Activated CD4-positive, alpha-beta T cell treated with anti-CD3 and anti-CD28 coated beads for 36 hours (primary cell): ENCODE measurements at regions of chr21 and their contacts with region 1.

Region 1: DNA sequence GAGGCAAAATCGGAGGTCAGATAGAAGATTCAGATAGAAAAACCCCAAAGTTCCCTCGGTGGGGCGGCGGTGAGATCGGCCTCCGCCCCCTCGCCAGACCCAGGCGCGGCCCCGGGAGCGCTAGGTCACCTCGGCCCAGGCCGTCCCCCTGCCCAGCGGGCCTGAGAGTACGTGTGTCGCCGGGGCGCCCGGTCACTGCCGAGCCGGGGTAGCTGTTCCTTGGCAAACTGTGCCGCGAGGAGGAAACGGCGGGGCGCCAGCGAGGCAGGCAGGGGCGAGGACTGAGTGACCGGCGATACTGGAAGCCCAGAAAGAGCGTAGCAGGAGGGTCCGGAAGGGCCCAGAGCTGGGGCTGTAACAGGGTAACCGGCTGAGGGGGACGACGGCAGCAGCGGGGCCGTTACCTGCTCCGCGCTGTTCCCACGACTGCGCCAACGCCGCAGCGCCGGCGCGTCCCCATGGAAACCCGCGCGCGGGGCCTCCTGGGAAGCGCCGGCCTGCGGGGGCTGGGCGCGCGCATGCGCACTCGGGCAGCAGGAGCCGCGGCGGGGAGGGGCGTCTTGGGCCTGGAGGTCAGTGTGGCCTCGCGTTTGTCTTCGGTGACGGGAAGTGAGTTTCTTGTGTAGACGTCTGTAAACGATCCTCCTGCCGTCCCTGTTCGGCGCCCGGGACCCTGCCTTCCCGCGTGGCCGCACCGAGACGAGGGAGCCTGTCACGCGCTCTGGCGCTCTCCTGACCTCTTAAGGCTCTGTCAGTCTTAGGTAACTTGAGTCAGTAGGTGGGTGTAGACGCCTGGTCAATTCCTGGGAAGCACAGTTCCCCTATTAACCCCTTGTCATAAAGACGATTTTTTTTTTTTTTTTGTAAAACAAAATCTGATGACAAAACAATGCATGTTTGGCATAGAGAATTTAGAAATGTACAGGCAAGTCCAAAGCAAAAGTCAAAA is at the start of gene LCA5L:
- DNase-seq: peak; percentile 94
- ATAC-seq: peak; percentile 95
- H3K4me3 Mint-ChIP-seq: peak within 1 kb of the TSS; percentile 84
- H3K27ac Mint-ChIP-seq: peak within 1 kb of the TSS; percentile 93
- H3K4me1 Mint-ChIP-seq: peaks cover 16% of the 10 kb centered on the region
- H3K27me3 Mint-ChIP-seq: peaks cover 6% of the 10 kb centered on the region
- total RNA-seq, gene LCA5L: 0.25 to 0.32 TPM

Region 2: DNA sequence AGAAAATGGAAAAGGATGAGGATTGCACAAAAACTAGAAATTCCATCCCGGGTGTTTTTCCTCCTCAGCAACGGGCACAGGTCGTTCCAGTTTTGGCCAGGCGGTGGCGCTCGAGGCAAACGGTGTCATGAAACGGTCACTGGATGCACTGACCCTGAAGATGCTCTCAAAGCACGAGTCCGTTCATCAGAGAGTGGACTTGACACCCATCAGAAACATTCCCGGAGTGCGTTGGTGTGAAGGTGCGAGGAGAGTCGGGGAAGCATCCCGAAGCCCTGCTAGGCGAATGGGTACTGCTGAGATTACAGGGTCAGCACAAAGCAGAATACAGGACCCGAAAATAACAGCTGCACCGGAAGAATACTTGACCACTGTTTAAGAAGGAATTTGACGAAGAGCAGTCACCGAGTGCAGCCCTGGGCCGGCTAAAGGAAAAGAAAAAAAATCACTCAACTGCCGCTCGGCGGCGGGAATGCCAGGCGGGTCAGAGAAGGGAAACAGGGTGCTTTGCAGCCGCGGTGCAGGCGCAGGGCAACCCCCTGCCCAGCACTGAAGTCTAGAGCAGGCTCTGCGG is 711.5 kb before region 1 on chr21:
- CTCF ChIA-PET with region 1: no interaction called
- POLR2A ChIA-PET with region 1: no interaction called
- intact Hi-C with region 1: loop called in 1 of 2 experiments (anchors 2 kb)
- DNase-seq: peak; percentile 84
- ATAC-seq: peak; percentile 60
- H3K4me3 Mint-ChIP-seq: peak overlapping the region; percentile 74
- H3K27ac Mint-ChIP-seq: peak overlapping the region; percentile 67
- H3K4me1 Mint-ChIP-seq: peaks cover 11% of the 10 kb centered on the region
- H3K27me3 Mint-ChIP-seq: peaks cover 17% of the 10 kb centered on the region

Region 3: DNA sequence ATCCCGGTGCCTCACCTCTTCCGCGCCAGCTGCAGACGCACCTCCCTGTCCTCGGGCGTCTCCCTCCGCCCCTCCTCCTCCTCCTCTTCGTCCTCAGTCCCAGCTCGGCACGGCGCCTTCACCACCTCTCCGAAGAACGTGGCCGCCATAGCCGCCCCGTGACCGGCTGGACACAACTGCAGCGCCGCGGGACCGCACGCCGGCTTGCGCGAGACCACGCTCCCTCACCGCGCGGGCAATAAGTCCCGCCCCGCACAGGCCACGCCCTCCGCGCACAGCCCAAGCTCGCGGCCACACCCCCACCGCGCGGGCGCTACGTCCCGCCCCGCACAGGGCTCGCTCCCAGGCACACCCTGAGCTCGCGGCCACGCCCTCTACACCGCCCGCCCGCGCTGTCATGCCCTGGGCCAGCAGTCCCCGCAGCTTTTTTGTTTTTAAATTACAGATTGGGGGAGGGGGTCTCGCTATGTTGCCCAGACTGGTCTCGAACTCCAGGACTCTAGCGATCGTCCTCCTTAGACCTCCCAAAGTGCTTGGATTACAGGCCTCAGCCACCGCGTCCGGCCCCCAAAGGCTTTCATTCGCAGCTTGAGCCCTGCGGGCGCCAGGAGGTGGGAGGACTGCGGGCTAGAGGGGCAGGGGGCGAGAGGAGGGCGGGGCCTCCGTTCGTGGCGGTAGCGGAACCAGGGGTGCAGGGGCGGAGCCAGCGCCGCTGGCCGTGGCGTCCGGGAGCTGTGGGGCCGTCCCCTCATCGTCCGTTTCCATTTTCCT is 262.2 kb before region 1 on chr21 and contains the start of gene PSMG1:
- CTCF ChIA-PET with region 1: interaction called, 3 read pairs
- POLR2A ChIA-PET with region 1: interaction called, 3 read pairs
- intact Hi-C with region 1: loop called (anchors 1 to 5 kb)
- DNase-seq: peak; percentile 97
- ATAC-seq: peak; percentile 92
- H3K4me3 Mint-ChIP-seq: peak within 1 kb of the TSS; percentile 95
- H3K27ac Mint-ChIP-seq: peak within 1 kb of the TSS; percentile 97
- H3K4me1 Mint-ChIP-seq: peaks cover 63% of the 10 kb centered on the region
- H3K27me3 Mint-ChIP-seq: no peaks in the 10 kb centered on the region
- total RNA-seq, gene PSMG1: 109 to 123 TPM

Region 4: DNA sequence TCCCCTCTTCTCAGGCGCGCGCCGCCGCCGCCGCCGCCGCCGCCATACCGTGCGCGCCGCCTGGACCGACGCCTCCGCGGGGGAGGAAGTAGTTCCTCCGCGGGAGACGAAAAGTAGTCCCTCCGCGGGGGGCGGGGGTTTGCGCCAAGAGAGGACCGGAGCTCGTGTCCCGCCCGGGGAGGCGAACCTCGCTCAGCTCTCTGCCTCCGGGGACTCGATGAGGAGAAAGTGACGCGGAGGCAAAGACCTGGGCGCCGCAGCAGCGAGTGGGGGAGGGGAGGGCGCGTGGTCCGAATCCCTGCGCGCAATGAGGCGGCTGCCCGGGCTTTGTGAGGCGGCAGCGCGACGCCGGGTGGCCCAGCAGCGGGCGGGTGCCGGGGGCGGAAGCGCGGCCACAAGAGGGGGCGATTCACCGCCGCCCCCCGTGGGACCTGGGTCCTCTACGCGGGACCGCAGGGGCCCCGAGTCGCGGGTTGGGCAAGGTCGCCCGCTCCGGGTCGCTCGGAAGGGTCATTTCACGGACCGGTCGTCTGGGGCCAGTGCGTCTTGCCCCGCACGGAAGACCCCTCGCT is 131.9 kb before region 1 on chr21 and contains the start of gene BRWD1:
- CTCF ChIA-PET with region 1: no interaction called
- POLR2A ChIA-PET with region 1: no interaction called
- intact Hi-C with region 1: loop called in 1 of 2 experiments (anchors 1 kb)
- DNase-seq: peak; percentile 85
- ATAC-seq: peak; percentile 42
- H3K4me3 Mint-ChIP-seq: peak within 1 kb of the TSS; percentile 92
- H3K27ac Mint-ChIP-seq: peak within 1 kb of the TSS; percentile 96
- H3K4me1 Mint-ChIP-seq: peaks cover 39% of the 10 kb centered on the region
- H3K27me3 Mint-ChIP-seq: no peaks in the 10 kb centered on the region
- total RNA-seq, gene BRWD1: 19.1 to 24.5 TPM

Region 5: DNA sequence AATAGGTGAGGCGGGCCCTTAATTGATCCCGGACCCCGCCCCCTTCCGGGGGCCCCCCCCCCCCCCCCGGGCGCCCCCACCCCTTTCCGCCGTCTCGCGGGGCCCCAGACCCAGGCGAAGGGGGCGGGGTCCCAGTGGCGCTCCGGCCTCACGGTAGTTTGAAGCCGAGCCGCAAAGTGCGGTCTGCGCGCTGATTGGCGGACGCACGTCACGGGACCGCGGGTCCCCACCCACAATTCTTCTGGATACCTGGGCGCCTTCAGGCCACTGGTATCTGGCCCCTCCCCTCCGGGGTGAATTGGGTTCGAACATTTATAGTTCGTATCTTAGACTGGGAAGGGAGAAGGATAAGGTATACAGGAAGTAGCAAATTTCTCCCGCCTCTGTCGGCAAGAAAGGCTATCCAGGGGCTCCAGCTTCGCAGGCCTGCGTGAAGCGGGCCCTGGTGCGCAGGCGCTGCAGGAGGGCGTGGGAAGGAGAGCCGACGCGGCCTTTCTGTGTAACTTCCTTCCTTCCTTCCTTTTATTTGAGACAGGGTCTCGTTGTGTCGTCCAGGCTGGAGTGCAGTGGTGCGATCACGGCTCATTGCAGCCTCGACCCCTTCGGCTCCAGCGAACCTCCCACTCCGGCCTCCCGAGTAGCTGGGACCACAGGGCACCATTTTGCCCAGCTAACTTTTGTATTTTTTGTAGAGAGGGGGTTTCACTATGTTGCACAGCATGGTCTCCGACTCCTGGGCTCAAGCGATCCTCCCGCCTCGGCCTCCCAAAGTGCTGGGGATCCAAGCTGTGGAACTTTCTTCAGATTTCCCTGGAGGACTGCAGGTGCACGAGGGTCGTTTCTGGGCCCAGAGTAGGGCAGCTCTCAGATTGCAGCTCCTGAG is 96.1 kb before region 1 on chr21:
- CTCF ChIA-PET with region 1: no interaction called
- POLR2A ChIA-PET with region 1: no interaction called
- intact Hi-C with region 1: loop called in 1 of 2 experiments (anchors 1 kb)
- DNase-seq: peak; percentile 99
- ATAC-seq: peak; percentile 89
- H3K4me3 Mint-ChIP-seq: peak overlapping the region; percentile 92
- H3K27ac Mint-ChIP-seq: peak overlapping the region; percentile 100
- H3K4me1 Mint-ChIP-seq: peaks cover 33% of the 10 kb centered on the region
- H3K27me3 Mint-ChIP-seq: no peaks in the 10 kb centered on the region

Region 6: GRCh38 chr21:39379986-39380891 is 65.4 kb before region 1 on chr21:
- CTCF ChIA-PET with region 1: interaction called, 8 read pairs
- POLR2A ChIA-PET with region 1: no interaction called
- intact Hi-C with region 1: loop called (anchors 1 to 5 kb)
- DNase-seq: peak; percentile 96
- ATAC-seq: peak; percentile 98
- H3K4me3 Mint-ChIP-seq: peak overlapping the region; percentile 84
- H3K27ac Mint-ChIP-seq: peak overlapping the region; percentile 64
- H3K4me1 Mint-ChIP-seq: peaks cover 23% of the 10 kb centered on the region
- H3K27me3 Mint-ChIP-seq: no peaks in the 10 kb centered on the region

Region 7: DNA sequence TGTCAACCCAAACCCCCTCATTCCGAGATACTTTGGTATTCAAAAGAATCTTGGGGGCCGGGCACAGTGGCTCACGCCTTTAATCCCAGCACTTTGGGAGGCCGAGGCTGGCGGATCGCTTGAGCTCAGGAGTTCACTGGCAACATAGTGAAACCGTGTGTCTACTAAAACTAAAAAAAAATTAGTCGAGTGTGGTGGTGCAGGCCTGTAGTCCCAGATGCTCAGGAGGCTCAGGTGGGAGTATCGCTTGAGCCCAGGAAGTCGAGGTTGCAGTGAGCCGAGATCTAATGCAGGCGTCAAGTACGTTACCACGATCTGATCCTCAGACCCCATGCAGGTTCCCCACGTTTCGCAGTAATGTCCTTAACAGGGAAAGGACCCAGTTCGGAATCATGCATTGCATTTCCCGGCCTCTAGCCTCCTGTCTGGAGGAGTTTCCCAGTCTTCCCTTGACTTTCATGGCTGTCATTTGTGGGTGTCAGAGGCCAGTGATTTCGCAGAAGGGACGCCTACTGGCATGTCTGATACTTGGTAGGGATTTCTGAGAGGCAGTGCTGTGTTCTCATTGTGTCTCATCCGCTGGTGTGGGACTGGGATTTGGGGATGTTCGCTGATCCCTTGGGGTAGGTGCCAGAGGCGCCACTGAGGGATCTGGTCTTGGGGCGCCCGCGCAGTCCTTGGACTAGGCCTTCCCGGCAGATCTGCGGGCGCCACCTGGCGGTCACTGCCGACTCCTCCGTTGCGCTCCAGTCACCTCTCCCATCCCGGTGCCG is 57.4 kb before region 1 on chr21:
- CTCF ChIA-PET with region 1: interaction called, 3 read pairs
- POLR2A ChIA-PET with region 1: no interaction called
- intact Hi-C with region 1: loop called (anchors 1 to 5 kb)
- DNase-seq: peak; percentile 95
- ATAC-seq: peak; percentile 83
- H3K4me3 Mint-ChIP-seq: peak overlapping the region; percentile 73
- H3K27ac Mint-ChIP-seq: peak overlapping the region; percentile 89
- H3K4me1 Mint-ChIP-seq: peaks cover 25% of the 10 kb centered on the region
- H3K27me3 Mint-ChIP-seq: no peaks in the 10 kb centered on the region

Region 8: DNA sequence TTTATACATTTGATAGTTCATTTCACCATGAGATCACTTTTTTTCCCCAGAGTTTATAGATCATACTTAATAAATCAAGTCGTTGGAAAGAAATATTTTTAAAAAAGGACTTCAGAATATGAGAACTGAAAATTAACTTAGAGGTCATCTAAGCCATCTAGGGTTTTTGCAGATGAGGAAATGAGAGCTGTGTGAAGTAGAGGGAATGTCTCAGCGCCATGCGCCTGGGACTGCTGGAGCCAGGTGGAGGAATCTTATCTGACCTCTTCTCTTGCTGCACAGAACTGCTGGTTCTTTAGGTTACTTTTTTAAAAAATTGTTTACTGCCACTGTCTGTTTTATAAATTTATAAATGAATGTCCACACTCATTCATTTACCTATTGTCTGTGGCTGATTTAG is 17.7 kb after region 1 on chr21:
- CTCF ChIA-PET with region 1: no interaction called
- POLR2A ChIA-PET with region 1: no interaction called
- intact Hi-C with region 1: no loop called
- DNase-seq: no peak
- ATAC-seq: no peak
- H3K4me3 Mint-ChIP-seq: no peak overlapping the region
- H3K27ac Mint-ChIP-seq: no peak overlapping the region
- H3K4me1 Mint-ChIP-seq: peaks cover 3% of the 10 kb centered on the region
- H3K27me3 Mint-ChIP-seq: no peaks in the 10 kb centered on the region